H1 (cell line): ENCODE measurements at regions of chr2 and their contacts with region 1.

Region 1: DNA sequence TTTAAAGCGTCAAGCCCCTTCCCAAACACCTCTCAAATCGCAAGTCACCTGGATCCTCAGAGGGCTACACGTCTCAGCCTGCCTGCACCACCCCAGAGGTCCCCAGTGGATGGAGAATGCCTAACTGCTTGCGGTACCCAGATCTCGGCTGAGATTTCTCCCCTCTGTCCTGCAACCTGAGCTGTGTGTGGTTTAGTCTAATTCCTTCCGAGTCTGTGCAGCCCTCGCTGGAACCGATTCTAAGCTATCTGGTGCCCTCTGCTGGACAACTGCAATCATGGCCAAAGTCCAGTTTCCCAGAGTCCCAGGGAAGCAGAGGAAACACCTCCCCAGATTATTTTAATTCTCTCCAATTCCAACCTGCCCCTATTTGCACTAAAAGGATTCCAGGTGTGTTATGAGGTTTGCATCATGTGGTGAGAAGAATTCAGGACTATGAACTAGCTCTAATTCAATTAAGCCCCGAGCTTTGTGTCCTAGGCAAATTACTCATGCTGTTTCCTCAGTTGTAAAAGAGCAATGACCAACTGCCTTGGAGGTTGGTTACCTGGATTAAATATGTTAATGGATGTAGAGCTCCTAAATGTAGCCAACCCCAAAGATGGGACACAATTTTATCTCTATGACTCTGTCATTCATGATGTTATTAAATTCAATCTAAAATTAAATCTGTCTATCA is 276.1 kb upstream of the NCKAP5 start:
- DNase-seq: peak; percentile 19 to 82
- H3K4me3 ChIP-seq: no peak overlapping the region
- H3K27ac ChIP-seq: no peak overlapping the region
- H3K4me1 ChIP-seq: no peaks in the 10 kb centered on the region
- H3K27me3 ChIP-seq: no peaks in the 10 kb centered on the region; a peak in 1 of 7 replicates
- CTCF ChIP-seq: peak; percentile 77 to 84 (median 82)
- EP300 ChIP-seq: no peak
- POLR2A ChIP-seq: no peak
- RAD21 ChIP-seq: peak; percentile 97 to 98

Region 2: GRCh38 chr2:133568172-133568571 is 276.2 kb before region 1 on chr2 and contains the start of gene NCKAP5:
- CTCF ChIA-PET with region 1: interaction called, 24 read pairs
- POLR2A ChIA-PET with region 1: no interaction called
- DNase-seq: no peak
- H3K4me3 ChIP-seq: 0 out of 8 replicates have a peak within 1 kb of the TSS, but pooled peaks of 1 of the 4 experiments have one; percentile 3
- H3K27ac ChIP-seq: no peak within 1 kb of the TSS
- H3K4me1 ChIP-seq: peaks cover 2 to 26% (median 11%) of the 10 kb centered on the region in 4 experiments; a peak in 5 of 7 replicates
- H3K27me3 ChIP-seq: no peaks in the 10 kb centered on the region; a peak in 1 of 7 replicates
- CTCF ChIP-seq: no peak
- EP300 ChIP-seq: no peak
- POLR2A ChIP-seq: no peak
- RAD21 ChIP-seq: no peak
- total RNA-seq, gene NCKAP5: 0.46 and 0.86 TPM in 2 replicates

Region 3: GRCh38 chr2:133780099-133780839 is 64.1 kb before region 1 on chr2:
- CTCF ChIA-PET with region 1: interaction called, 14 read pairs
- POLR2A ChIA-PET with region 1: no interaction called
- DNase-seq: peak; percentile 10 to 75
- H3K4me3 ChIP-seq: no peak overlapping the region
- H3K27ac ChIP-seq: no peak overlapping the region
- H3K4me1 ChIP-seq: no peaks in the 10 kb centered on the region
- H3K27me3 ChIP-seq: no peaks in the 10 kb centered on the region
- CTCF ChIP-seq: peak; percentile 16 to 81 (median 65)
- EP300 ChIP-seq: no peak
- POLR2A ChIP-seq: no peak
- RAD21 ChIP-seq: peak; percentile 88 to 89

Region 4: DNA sequence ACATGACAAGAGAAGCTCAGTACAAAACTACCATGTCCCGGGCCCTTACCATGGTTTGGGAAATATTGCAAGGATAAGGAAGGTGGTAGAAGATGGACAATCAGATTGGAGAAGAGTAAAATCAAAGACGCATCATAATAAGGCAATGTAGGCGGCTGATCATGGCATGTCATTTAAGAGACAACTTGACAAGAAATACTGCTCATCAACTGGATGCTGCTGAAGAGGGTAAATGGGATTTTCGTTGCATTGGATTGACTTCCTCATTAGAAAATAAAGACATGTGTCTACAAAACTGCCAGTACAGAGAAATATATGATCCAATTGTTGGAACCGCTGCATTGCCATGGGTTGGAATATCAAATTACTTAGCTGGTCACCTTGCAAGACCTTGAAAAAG is 37.8 kb before region 1 on chr2:
- CTCF ChIA-PET with region 1: interaction called, 13 read pairs
- POLR2A ChIA-PET with region 1: no interaction called
- DNase-seq: no peak
- H3K4me3 ChIP-seq: no peak overlapping the region
- H3K27ac ChIP-seq: no peak overlapping the region
- H3K4me1 ChIP-seq: no peaks in the 10 kb centered on the region
- H3K27me3 ChIP-seq: no peaks in the 10 kb centered on the region
- CTCF ChIP-seq: no peak
- EP300 ChIP-seq: no peak
- POLR2A ChIP-seq: no peak
- RAD21 ChIP-seq: no peak